Sigmoid colon (tissue), 7 donors: ENCODE measurements at regions of chr11 and their contacts with region 1.

Region 1: DNA sequence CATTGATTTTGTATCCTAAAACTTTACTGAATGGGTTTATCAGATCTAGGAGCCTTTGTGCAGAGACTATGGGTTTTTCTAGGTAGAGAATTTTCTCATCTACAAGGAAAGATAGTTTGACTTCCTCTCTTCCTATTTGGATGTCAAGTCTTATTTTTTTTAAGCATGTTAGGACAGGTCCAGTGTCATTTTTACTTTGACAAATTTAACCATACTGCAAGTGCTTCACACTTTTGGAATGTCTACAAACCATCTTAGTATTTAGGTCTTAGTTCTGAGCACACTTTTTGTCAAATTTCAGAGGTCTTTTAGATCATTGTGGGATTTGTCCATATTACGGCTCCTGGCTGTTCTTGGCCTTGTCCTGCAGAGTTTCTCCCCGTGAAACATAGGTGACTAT is 715.2 kb upstream of the RAG2 start:
- DNase-seq: no peak
- H3K4me3 ChIP-seq: no peak overlapping the region
- H3K27ac ChIP-seq: no peak overlapping the region
- H3K4me1 ChIP-seq: no peaks in the 10 kb centered on the region
- H3K27me3 ChIP-seq: no peaks in the 10 kb centered on the region
- CTCF ChIP-seq: no peak
- EP300 ChIP-seq: no peak
- POLR2A ChIP-seq: no peak

Region 2: GRCh38 chr11:37352485-37352884 is 39.2 kb after region 1 on chr11:
- intact Hi-C with region 1: loop called (anchors 2 kb)
- DNase-seq: no peak
- H3K4me3 ChIP-seq: no peak overlapping the region
- H3K27ac ChIP-seq: no peak overlapping the region
- H3K4me1 ChIP-seq: no peaks in the 10 kb centered on the region
- H3K27me3 ChIP-seq: no peaks in the 10 kb centered on the region
- CTCF ChIP-seq: no peak
- EP300 ChIP-seq: no peak
- POLR2A ChIP-seq: no peak

Region 3: GRCh38 chr11:37404231-37404630 is 91.0 kb after region 1 on chr11:
- intact Hi-C with region 1: no loop called
- DNase-seq: no peak
- H3K4me3 ChIP-seq: no peak overlapping the region
- H3K27ac ChIP-seq: no peak overlapping the region
- H3K4me1 ChIP-seq: no peaks in the 10 kb centered on the region
- H3K27me3 ChIP-seq: no peaks in the 10 kb centered on the region
- CTCF ChIP-seq: no peak
- EP300 ChIP-seq: no peak
- POLR2A ChIP-seq: no peak